Ascending aorta (tissue), 2 donors: ENCODE measurements at regions of chr1 and their contacts with region 1.

Region 1: GRCh38 chr1:118151312-118151937 is 33.6 kb downstream of the SPAG17 start:
- DNase-seq: no peak
- H3K4me3 ChIP-seq: no peak overlapping the region
- H3K27ac ChIP-seq: no peak overlapping the region
- H3K4me1 ChIP-seq: no peaks in the 10 kb centered on the region
- H3K27me3 ChIP-seq: no peaks in the 10 kb centered on the region
- CTCF ChIP-seq: peak in 2 of 3 experiments; percentile 37 to 56

Region 2: GRCh38 chr1:117985973-117986372 is 165.5 kb before region 1 on chr1:
- intact Hi-C with region 1: no loop called
- DNase-seq: no peak
- H3K4me3 ChIP-seq: no peak overlapping the region
- H3K27ac ChIP-seq: no peak overlapping the region
- H3K4me1 ChIP-seq: no peaks in the 10 kb centered on the region
- H3K27me3 ChIP-seq: no peaks in the 10 kb centered on the region
- CTCF ChIP-seq: no peak

Region 3: GRCh38 chr1:118032883-118033282 is 118.5 kb before region 1 on chr1:
- intact Hi-C with region 1: no loop called
- DNase-seq: no peak
- H3K4me3 ChIP-seq: no peak overlapping the region
- H3K27ac ChIP-seq: no peak overlapping the region
- H3K4me1 ChIP-seq: no peaks in the 10 kb centered on the region
- H3K27me3 ChIP-seq: no peaks in the 10 kb centered on the region
- CTCF ChIP-seq: no peak

Region 4: GRCh38 chr1:119008483-119009311 is 857.3 kb after region 1 on chr1:
- intact Hi-C with region 1: loop called (anchors 5 kb)
- DNase-seq: no peak
- H3K4me3 ChIP-seq: peak overlapping the region; percentile 27 to 59
- H3K27ac ChIP-seq: no peak overlapping the region
- H3K4me1 ChIP-seq: peaks cover 6 to 8% of the 10 kb centered on the region in 2 donors
- H3K27me3 ChIP-seq: peaks cover 19% of the 10 kb centered on the region
- CTCF ChIP-seq: peak; percentile 31 to 62 (median 47)

Region 5: GRCh38 chr1:119367427-119368124 is 1216.2 kb after region 1 on chr1:
- intact Hi-C with region 1: loop called (anchors 5 kb)
- DNase-seq: no peak
- H3K4me3 ChIP-seq: no peak overlapping the region
- H3K27ac ChIP-seq: no peak overlapping the region
- H3K4me1 ChIP-seq: no peaks in the 10 kb centered on the region
- H3K27me3 ChIP-seq: no peaks in the 10 kb centered on the region
- CTCF ChIP-seq: peak in 2 of 3 experiments; percentile 46 to 63